Activated CD4-positive, alpha-beta memory T cell treated with anti-CD3 and anti-CD28 coated beads for 36 hours (primary cell): ENCODE measurements at regions of chr11 and their contacts with region 1.

Region 1: DNA sequence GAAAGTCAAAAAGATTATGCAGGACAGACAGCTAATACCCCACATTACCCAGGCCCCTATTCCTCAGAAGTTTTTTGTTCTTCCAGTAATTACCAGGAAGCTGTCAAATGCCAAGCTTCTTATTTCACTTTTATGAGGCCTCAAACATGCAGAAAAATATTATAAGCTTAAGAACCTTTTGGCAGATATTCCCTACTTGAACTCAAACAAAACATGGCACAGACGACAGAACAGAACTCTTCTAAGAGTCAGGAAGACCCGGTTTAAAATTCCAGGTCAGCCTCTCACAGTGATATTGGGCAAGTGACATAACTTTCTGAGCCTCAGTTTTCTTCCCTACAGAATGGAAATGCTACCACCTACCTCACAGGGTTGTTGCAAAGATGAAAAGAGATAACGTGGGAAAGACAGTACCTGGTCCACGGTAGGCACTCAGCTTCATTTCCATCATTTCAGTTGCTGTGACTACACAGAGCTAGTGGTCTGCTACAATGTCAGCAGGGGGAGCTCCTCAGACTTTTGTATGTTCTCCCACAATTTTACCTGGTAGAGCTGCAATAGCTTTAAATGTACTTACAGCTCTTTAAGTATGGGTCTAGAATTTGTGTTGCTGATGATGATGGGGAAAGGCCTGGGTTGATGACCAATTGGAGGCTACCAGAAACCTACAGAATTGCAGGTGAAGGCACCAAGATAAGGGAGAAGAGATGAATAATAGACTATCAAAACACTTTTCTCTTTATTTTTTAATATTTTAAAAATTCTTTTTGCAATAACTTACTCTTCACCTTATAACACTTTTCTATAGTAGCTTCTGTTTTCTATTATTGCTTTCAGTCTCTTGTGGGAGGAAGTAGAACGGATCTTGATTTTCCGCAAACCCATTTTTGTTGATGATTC is 98.3 kb upstream of the CHRM4 start:
- DNase-seq: peak; percentile 35
- H3K4me3 Mint-ChIP-seq: no peak overlapping the region
- H3K27ac Mint-ChIP-seq: no peak overlapping the region
- H3K4me1 Mint-ChIP-seq: peaks cover 2% of the 10 kb centered on the region
- H3K27me3 Mint-ChIP-seq: no peaks in the 10 kb centered on the region

Region 2: DNA sequence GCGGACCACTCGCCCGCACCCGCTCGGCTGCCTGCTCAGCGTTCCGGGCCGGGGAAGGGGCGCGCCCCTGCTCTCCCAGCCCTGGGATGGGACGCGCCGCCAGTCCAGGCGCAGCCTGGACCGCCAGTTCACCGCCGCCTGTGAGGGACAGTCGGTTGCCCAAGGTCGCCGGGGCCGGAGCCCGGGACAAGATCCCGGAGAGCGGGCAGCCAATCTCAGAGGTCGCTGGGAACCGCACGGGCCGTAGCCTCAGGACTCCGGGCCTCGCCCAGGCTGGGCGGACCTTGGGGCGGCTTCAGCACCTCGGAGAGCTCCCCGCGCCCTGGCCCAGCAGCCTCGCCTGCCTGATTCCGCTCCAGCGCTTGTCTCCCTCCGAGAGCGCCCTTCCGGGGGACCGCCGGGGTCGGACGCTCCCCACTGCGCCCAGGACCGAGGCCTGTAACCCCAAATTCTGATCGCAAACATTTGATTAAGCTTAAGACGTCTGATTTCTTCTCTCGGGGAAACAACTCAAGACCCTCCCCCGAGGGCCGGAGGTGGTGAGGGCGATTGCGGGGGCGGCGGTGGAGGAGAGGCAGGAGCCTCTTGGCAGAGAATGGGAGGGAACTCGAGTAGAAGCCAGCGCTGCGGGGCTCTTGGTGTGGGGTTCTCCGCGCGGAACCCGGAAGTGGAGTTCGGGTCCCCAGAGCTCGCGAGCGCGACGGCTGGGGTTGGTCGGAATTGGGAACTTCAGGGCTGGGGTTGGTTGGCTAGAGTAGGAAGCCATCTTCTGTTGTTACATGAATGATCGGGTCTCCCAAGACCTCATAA is 97.3 kb before region 1 on chr11:
- CTCF ChIA-PET with region 1: interaction called, 15 read pairs
- POLR2A ChIA-PET with region 1: no interaction called
- intact Hi-C with region 1: no loop called
- DNase-seq: peak; percentile 87
- H3K4me3 Mint-ChIP-seq: peak overlapping the region; percentile 71
- H3K27ac Mint-ChIP-seq: no peak overlapping the region
- H3K4me1 Mint-ChIP-seq: peaks cover 27% of the 10 kb centered on the region
- H3K27me3 Mint-ChIP-seq: peaks cover 37% of the 10 kb centered on the region

Region 3: DNA sequence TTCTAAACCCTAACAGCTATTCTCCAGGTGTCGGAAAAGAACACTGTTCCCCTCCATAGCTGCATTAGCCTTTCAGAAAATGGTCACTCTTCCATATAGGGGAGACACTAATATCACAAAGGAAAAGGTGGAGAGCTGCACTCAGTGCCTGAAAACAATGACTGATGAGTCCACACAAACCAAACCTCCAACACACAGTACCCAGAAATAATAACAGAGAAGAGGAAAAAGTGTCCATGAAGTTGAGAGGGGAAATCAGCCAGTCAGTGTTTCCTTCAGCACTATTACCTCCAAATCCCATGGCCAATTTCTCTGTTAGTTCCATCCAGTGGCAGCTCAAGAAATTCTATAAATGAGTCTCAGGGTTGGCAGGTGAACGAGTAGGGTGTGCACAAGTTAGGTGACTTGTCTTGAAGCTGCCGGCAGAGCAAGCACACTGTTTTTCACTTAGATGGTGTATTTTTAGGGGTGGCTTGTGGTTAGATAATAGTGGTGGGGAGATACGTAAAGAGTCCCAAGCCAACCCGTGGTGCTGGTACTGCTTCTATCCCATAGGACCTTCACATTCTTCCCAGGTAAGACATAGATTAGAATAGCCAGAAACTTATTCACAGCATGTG is 13.9 kb before region 1 on chr11:
- CTCF ChIA-PET with region 1: interaction called, 22 read pairs
- POLR2A ChIA-PET with region 1: no interaction called
- intact Hi-C with region 1: no loop called
- DNase-seq: no peak
- H3K4me3 Mint-ChIP-seq: no peak overlapping the region
- H3K27ac Mint-ChIP-seq: peak overlapping the region; percentile 61
- H3K4me1 Mint-ChIP-seq: peaks cover 43% of the 10 kb centered on the region
- H3K27me3 Mint-ChIP-seq: no peaks in the 10 kb centered on the region

Region 4: GRCh38 chr11:46521961-46522681 is 32.2 kb after region 1 on chr11:
- CTCF ChIA-PET with region 1: interaction called, 14 read pairs
- POLR2A ChIA-PET with region 1: no interaction called
- intact Hi-C with region 1: no loop called
- DNase-seq: no peak
- H3K4me3 Mint-ChIP-seq: no peak overlapping the region
- H3K27ac Mint-ChIP-seq: no peak overlapping the region
- H3K4me1 Mint-ChIP-seq: peaks cover 24% of the 10 kb centered on the region
- H3K27me3 Mint-ChIP-seq: no peaks in the 10 kb centered on the region

Region 5: GRCh38 chr11:46537537-46538295 is 47.8 kb after region 1 on chr11:
- CTCF ChIA-PET with region 1: interaction called, 74 read pairs
- POLR2A ChIA-PET with region 1: no interaction called
- intact Hi-C with region 1: loop called (anchors 2 kb)
- DNase-seq: peak; percentile 76
- H3K4me3 Mint-ChIP-seq: no peak overlapping the region
- H3K27ac Mint-ChIP-seq: no peak overlapping the region
- H3K4me1 Mint-ChIP-seq: peaks cover 14% of the 10 kb centered on the region
- H3K27me3 Mint-ChIP-seq: no peaks in the 10 kb centered on the region